ENCODE measurements at regions of chr5 and their contacts with region 1.

Region 1: GRCh38 chr5:87412630-87413342 is at the start of gene CCNH:
- DNase-seq: peak; percentile 98 to 99
- ATAC-seq: peak; percentile 99
- H3K4me3 ChIP-seq: peak within 1 kb of the TSS; percentile 52 to 65
- H3K27ac ChIP-seq: peak within 1 kb of the TSS; percentile 33 to 98
- H3K4me1 ChIP-seq: peaks cover 0 to 1% of the 10 kb centered on the region in 2 donors
- H3K27me3 ChIP-seq: no peaks in the 10 kb centered on the region
- total RNA-seq, gene CCNH: 83.4 to 96.9 TPM

Region 2: GRCh38 chr5:86617756-86618576 is 794.8 kb before region 1 on chr5 and contains the start of gene COX7C:
- intact Hi-C with region 1: loop called in 1 of 2 experiments (anchors 5 kb)
- DNase-seq: peak; percentile 90 to 93
- ATAC-seq: peak; percentile 98
- H3K4me3 ChIP-seq: peak within 1 kb of the TSS; percentile 78 to 80
- H3K27ac ChIP-seq: peak within 1 kb of the TSS in 1 of 2 donors; percentile 88
- H3K4me1 ChIP-seq: no peaks in the 10 kb centered on the region
- H3K27me3 ChIP-seq: no peaks in the 10 kb centered on the region
- total RNA-seq, gene COX7C: 330 to 336 TPM

Region 3: GRCh38 chr5:87383216-87383615 is 29.6 kb before region 1 on chr5:
- intact Hi-C with region 1: no loop called
- DNase-seq: no peak
- ATAC-seq: no peak
- H3K4me3 ChIP-seq: no peak overlapping the region
- H3K27ac ChIP-seq: no peak overlapping the region
- H3K4me1 ChIP-seq: no peaks in the 10 kb centered on the region
- H3K27me3 ChIP-seq: no peaks in the 10 kb centered on the region

Region 4: GRCh38 chr5:87457706-87458105 is 44.9 kb after region 1 on chr5:
- intact Hi-C with region 1: no loop called
- DNase-seq: no peak
- ATAC-seq: no peak
- H3K4me3 ChIP-seq: no peak overlapping the region
- H3K27ac ChIP-seq: no peak overlapping the region
- H3K4me1 ChIP-seq: no peaks in the 10 kb centered on the region
- H3K27me3 ChIP-seq: no peaks in the 10 kb centered on the region

Region 5: DNA sequence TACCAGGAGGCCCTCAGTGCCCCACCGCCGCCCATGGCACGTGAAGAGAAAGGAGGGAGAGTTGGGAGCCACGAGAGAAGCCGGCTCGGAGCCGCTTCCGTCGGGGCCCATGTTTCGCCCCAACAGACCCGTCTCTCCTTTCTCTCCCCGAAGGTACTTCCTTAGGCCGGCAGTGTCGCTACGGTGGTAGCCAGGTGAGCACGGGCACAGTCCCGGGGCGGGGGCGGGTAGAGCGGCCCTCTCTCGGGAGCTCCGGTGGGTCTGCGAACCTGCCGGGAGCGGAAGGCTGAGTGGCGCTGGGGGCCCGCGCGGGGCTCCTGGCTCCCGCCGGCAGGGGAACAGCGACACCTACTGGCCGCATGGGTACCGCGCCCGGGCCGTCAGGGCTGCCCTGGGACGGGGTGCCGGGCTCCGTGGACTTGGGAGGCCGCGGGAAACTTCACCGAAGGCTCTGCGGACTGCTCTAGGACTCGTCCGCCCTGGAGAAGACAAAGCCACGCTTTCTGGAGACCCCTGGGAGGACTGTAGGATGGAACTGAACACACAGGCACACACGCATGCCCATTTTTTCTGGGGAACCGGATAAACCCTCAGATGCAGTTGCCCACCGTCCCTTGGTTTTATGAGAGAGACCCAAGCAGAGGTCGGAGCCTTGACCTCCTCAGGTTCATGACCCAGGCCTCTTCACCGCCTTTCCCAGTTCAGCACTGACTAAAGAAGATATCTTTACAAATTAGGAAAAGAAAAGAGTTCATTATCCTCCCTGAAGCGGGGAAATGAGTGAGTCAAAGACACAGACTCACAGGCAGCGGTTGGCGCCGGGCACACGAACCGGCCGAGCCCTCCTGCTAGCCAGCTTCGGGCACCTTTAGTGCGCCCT is 1267.7 kb after region 1 on chr5:
- intact Hi-C with region 1: loop called in 1 of 2 experiments (anchors 10 kb)
- DNase-seq: peak; percentile 72 to 93
- ATAC-seq: peak; percentile 87
- H3K4me3 ChIP-seq: no peak overlapping the region
- H3K27ac ChIP-seq: no peak overlapping the region
- H3K4me1 ChIP-seq: no peaks in the 10 kb centered on the region
- H3K27me3 ChIP-seq: no peaks in the 10 kb centered on the region